Right ventricle myocardium superior (tissue), 1 donor: ENCODE measurements at regions of chr15 and their contacts with region 1.

Region 1: GRCh38 chr15:33179874-33180273 is 14.6 kb downstream of the FMN1 start:
- DNase-seq: no peak
- ATAC-seq: no peak

Region 2: DNA sequence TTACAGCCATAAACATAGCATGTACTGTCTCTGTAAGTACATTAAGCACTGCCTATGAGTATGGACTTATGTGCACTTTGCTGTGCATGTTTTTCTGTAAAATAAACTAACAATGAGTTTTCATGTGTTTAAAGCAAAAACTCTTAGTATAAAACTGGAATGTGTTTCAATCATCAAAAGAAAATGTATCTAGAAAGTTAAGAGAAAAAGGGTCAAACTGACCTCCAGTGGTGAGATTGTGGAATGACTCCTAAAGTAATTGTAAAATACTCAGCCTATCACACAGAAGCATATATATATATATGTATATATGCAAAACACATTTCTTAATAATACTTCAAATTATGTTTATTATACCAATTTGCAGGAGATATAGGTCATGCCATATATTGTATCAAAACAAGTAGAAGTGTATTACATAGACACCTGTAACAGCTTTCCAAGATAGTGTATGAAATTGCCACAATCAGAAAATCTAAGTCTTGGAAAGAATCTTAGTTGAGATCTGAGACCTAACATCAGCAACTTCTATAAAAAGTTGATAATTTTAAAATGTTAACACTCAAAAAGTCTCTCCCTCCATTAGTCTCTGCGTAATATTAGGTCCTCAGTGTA is 185.0 kb before region 1 on chr15:
- intact Hi-C with region 1: no loop called
- DNase-seq: no peak
- ATAC-seq: no peak

Region 3: DNA sequence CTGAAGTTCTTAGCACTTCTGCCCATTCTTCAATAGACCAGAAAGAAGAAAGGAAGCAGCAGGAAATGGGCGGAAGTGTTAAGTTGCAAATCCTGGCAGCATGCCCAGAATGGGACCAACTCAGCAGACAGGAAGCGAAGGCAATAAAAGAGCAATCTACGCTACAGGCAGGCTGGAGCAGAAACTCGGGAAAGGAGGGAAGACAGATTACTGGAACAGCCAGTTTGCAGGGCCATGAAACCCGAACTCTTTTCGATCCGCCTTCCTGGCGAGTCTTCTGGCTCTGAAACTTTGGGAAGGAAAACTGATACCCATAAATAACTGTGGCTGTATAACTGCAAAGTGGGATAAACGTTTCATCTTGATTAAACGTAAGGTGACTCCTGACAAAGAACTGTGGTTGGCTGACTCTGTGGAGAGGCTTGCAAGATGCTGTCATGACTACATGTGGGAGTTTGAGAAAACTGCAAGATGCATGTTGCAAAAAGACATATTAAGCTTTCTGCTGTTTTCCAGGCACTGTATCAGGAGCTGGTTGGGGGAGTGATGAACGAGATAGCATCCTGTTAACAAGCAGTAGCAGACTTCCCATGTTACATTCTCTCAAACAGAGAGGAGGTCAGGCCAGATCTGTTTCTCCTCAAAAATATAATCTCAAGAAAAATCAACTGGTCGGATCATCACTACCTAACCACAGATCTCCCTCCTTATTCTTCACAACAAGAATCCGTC is 53.1 kb before region 1 on chr15:
- intact Hi-C with region 1: loop called (anchors 5 kb)
- DNase-seq: peak; percentile 79
- ATAC-seq: peak; percentile 83

Region 4: DNA sequence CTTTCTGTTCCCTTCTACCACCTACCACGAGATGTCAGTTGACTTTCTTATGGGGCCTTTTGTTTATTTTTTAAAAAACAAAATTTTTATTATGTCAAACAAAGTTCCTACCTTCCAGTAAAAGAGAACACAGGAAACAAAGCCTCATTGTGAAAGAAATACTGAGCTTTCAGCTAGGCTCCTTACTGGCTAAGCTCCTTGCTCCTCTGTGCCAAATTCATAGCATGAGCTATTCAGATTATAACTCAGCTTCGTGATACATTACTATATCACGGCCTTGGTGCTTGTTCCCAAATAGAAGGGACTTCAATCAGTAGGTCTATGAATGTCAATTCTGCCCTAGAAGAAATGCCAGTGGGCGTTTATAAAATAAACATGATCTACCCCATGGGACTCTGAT is 642.6 kb after region 1 on chr15:
- intact Hi-C with region 1: no loop called
- DNase-seq: no peak
- ATAC-seq: no peak